ENCODE measurements at regions of chr9 and their contacts with region 1.

Region 1: DNA sequence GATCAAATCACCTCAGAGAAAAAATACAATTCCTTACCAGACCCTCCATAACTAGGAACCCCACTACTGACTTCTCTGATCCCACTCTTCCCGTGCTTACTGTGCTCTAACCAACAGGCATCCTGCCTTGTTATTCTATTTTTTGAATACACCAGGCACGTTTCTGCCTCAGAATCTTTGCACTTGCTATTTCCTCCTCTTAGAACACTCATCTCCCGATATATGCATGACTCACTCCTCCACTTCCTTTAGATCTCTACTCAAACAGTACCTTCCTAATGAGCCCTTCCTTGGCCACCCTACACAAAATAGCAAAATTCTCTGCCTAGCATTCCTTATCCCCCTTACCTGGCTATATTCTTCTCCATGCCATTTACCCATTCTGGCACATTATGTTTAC is 43.9 kb downstream of the MAPKAP1 start:
- DNase-seq: no peak
- H3K4me3 ChIP-seq: no peak overlapping the region
- H3K27ac ChIP-seq: no peak overlapping the region
- H3K4me1 ChIP-seq: no peaks in the 10 kb centered on the region
- H3K27me3 ChIP-seq: no peaks in the 10 kb centered on the region
- CTCF ChIP-seq: no peak

Region 2: GRCh38 chr9:125593585-125594229 is 69.4 kb before region 1 on chr9:
- intact Hi-C with region 1: no loop called
- DNase-seq: no peak
- H3K4me3 ChIP-seq: no peak overlapping the region
- H3K27ac ChIP-seq: no peak overlapping the region
- H3K4me1 ChIP-seq: no peaks in the 10 kb centered on the region
- H3K27me3 ChIP-seq: no peaks in the 10 kb centered on the region
- CTCF ChIP-seq: no peak

Region 3: GRCh38 chr9:125684716-125685115 is 21.6 kb after region 1 on chr9:
- intact Hi-C with region 1: loop called (anchors 1 kb)
- DNase-seq: no peak
- H3K4me3 ChIP-seq: no peak overlapping the region
- H3K27ac ChIP-seq: no peak overlapping the region
- H3K4me1 ChIP-seq: no peaks in the 10 kb centered on the region
- H3K27me3 ChIP-seq: no peaks in the 10 kb centered on the region
- CTCF ChIP-seq: no peak

Measured in ascending aorta (tissue), 2 donors.